CD8-positive, alpha-beta T cell (primary cell): ENCODE measurements at regions of chrX and their contacts with region 1.

Region 1: DNA sequence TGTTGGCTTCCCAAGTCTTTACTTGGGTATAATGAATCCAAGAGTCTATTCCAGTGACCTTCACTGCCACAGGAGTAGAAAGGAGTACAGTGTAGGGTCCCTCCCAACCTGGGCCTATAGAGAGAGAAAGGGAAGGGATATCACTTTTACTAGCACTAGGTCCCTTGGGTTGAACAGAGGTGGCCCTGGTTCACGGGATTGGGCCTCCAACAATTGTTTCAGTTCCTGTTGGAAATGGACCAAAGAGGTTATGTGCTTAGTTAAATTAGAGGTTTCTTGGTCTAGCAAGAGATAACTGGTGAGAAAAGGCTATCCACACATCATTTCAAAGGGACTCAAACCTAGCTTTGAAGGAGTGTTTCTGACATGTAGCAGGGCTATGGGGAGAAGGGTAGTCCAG is 57.1 kb upstream of the MED14 start:
- DNase-seq: no peak
- ATAC-seq: no peak
- H3K4me3 ChIP-seq: no peak overlapping the region
- H3K4me3 Mint-ChIP-seq: no peak overlapping the region
- H3K27ac ChIP-seq: no peak overlapping the region
- H3K27ac Mint-ChIP-seq: no peak overlapping the region
- H3K4me1 ChIP-seq: no peaks in the 10 kb centered on the region
- H3K4me1 Mint-ChIP-seq: peaks cover 3% of the 10 kb centered on the region
- H3K27me3 ChIP-seq: no peaks in the 10 kb centered on the region
- H3K27me3 Mint-ChIP-seq: no peaks in the 10 kb centered on the region
- CTCF ChIP-seq: no peak

Region 2: DNA sequence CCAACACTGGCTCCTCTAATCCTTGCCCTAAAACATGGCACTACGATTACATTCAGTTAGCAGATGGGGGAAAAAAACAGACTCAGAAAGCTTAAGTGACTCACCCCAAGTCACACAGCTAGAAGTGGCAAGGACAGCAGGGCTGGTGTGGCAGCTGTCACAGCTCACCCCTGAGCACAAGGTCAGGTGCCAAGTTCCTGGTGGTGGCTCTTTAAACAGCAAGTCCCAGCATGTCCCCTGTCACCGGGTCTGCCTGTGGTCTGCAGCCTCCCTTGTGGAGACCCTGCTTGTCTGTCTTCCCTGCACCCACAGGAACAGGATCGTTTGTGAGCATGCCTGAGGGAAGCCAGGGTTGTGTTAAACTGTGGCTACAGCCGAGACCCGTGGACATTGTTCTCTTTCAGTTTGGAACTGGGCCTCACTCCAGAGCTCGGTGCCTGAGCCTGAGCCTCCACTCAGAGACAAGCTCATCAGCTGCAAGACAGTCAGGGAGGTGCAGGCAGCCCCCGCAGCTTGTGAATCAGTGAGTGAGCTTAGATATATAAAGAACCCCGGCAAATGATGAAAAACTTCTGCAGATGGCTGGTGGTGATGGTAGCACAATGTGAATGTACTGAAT is 955.5 kb before region 1 on chrX:
- CTCF ChIA-PET with region 1: no interaction called
- POLR2A ChIA-PET with region 1: no interaction called
- intact Hi-C with region 1: no loop called
- DNase-seq: no peak
- ATAC-seq: no peak
- H3K4me3 ChIP-seq: no peak overlapping the region
- H3K4me3 Mint-ChIP-seq: no peak overlapping the region
- H3K27ac ChIP-seq: no peak overlapping the region
- H3K27ac Mint-ChIP-seq: no peak overlapping the region
- H3K4me1 ChIP-seq: no peaks in the 10 kb centered on the region
- H3K4me1 Mint-ChIP-seq: no peaks in the 10 kb centered on the region
- H3K27me3 ChIP-seq: no peaks in the 10 kb centered on the region
- H3K27me3 Mint-ChIP-seq: no peaks in the 10 kb centered on the region
- CTCF ChIP-seq: no peak

Region 3: GRCh38 chrX:40652664-40653063 is 139.8 kb before region 1 on chrX:
- CTCF ChIA-PET with region 1: interaction called, 67 read pairs
- POLR2A ChIA-PET with region 1: no interaction called
- intact Hi-C with region 1: loop called (anchors 1 kb)
- DNase-seq: no peak
- ATAC-seq: no peak
- H3K4me3 ChIP-seq: no peak overlapping the region
- H3K4me3 Mint-ChIP-seq: no peak overlapping the region
- H3K27ac ChIP-seq: peak overlapping the region in 1 of 2 experiments; percentile 4
- H3K27ac Mint-ChIP-seq: no peak overlapping the region
- H3K4me1 ChIP-seq: peaks cover 5% of the 10 kb centered on the region
- H3K4me1 Mint-ChIP-seq: peaks cover 8% of the 10 kb centered on the region
- H3K27me3 ChIP-seq: no peaks in the 10 kb centered on the region
- H3K27me3 Mint-ChIP-seq: no peaks in the 10 kb centered on the region
- CTCF ChIP-seq: no peak